WTC11 (cell line): ENCODE measurements at regions of chr14 and their contacts with region 1.

Region 1: GRCh38 chr14:95442633-95443021 is 73.8 kb downstream of the SYNE3 start:
- DNase-seq: peak; percentile 83
- ATAC-seq: peak; percentile 94
- H3K4me3 Mint-ChIP-seq: no peak overlapping the region
- H3K27ac Mint-ChIP-seq: no peak overlapping the region
- H3K4me1 Mint-ChIP-seq: no peaks in the 10 kb centered on the region
- H3K27me3 Mint-ChIP-seq: no peaks in the 10 kb centered on the region
- CTCF ChIP-seq: peak; percentile 72

Region 2: DNA sequence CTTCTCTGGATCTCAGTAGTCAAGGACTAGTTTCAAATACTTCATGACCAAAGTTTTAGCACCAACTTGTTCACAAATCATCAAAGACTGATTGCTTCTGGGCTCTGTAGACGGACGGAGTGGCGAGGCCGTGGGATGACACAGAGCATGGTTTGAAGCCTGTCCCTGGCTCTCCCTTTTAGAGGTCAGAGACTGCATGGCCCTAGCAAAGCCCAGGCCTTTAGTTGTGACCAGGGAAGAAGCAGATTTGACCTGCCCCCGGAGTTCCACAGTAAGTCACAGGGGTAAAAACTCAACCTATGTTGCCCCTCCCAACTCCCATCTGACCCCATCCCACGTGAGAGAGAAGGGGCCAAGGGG is 16.5 kb before region 1 on chr14:
- CTCF ChIA-PET with region 1: interaction called, 24 read pairs
- POLR2A ChIA-PET with region 1: no interaction called
- DNase-seq: no peak
- ATAC-seq: no peak
- H3K4me3 Mint-ChIP-seq: no peak overlapping the region
- H3K27ac Mint-ChIP-seq: no peak overlapping the region
- H3K4me1 Mint-ChIP-seq: no peaks in the 10 kb centered on the region
- H3K27me3 Mint-ChIP-seq: peaks cover 7% of the 10 kb centered on the region
- CTCF ChIP-seq: no peak

Region 3: GRCh38 chr14:95515596-95516552 is 73.2 kb after region 1 on chr14:
- CTCF ChIA-PET with region 1: interaction called, 26 read pairs
- POLR2A ChIA-PET with region 1: no interaction called
- DNase-seq: peak; percentile 68
- ATAC-seq: peak; percentile 74
- H3K4me3 Mint-ChIP-seq: peak overlapping the region; percentile 68
- H3K27ac Mint-ChIP-seq: no peak overlapping the region
- H3K4me1 Mint-ChIP-seq: peaks cover 13% of the 10 kb centered on the region
- H3K27me3 Mint-ChIP-seq: peaks cover 39% of the 10 kb centered on the region
- CTCF ChIP-seq: no peak

Region 4: DNA sequence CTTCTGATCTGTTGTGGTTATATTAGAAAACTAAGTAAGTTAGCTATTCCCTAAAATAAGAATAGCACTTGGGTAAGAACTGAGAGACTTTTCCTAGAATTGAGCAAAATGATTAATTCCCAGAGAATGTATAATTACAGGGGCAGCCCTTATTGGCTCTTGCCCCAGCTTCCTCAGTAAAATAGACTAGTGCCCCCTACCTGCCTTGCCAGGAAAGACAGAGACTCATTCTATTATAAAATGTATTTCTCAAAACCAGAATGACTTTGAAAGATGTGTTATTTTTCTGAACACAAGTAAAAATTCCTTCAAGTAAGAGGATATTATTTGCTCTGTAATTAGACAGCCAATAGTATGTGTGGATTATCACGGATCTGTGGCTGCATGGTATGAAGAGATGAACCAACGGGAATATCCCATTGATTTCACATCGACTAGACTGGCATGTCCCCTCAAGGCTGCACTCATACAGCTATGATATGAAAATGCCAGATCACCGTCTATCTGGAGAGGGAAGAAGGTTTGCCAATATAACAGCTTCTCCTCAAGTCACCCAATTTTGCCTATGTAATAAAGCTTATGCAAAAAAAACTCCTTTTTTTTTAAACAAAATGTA is 84.9 kb after region 1 on chr14:
- CTCF ChIA-PET with region 1: interaction called, 38 read pairs
- POLR2A ChIA-PET with region 1: interaction called, 3 read pairs
- DNase-seq: no peak
- ATAC-seq: peak; percentile 65
- H3K4me3 Mint-ChIP-seq: no peak overlapping the region
- H3K27ac Mint-ChIP-seq: no peak overlapping the region; the same call in 1 of the 2 replicates
- H3K4me1 Mint-ChIP-seq: peaks cover 21% of the 10 kb centered on the region
- H3K27me3 Mint-ChIP-seq: no peaks in the 10 kb centered on the region
- CTCF ChIP-seq: peak; percentile 63

Region 5: DNA sequence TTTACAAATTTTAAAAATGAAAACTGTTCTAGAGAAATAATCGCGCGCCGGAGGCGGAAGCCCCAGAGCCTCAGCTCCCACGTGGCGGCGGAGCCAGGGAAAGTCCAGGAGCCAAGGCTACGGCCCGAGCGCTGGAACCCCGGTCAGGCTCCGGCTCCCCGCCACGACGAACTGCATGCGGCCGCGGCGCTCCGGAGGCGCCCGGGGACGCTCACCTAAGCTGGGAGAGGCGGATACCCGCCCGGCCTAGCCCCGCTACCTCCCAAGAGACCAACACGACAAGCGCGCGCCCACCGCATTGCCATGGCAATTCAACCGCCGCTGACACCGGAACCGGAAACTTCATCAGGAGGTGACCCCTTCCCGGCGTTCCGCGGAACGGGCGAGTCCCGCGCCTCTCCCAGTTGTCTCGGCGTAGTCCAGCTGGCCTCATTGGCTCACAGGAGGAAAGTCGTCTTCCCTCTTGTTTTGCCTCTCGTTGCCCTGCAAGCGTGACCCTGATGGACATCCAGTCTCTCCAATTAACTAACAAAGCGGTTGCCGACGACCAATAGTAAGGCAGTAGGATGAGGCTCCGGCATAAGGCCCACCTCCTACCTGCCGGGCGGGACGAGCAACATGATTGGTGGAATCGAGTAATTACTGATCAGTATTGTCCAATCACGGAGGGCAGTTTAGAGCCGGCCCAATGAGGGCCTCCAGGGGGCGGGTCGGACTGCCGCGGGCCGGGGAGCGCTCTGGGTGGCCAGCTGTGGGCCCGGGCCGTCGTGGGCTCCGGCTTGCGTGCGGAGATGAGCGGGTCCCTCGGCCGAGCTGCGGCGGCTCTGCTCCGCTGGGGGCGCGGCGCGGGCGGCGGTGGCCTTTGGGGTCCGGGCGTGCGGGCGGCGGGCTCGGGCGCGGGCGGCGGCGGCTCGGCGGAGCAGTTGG is 91.9 kb after region 1 on chr14 and contains the start of gene GLRX5:
- CTCF ChIA-PET with region 1: interaction called, 11 read pairs
- POLR2A ChIA-PET with region 1: no interaction called
- DNase-seq: peak; percentile 97
- ATAC-seq: peak; percentile 95
- H3K4me3 Mint-ChIP-seq: peak within 1 kb of the TSS; percentile 97
- H3K27ac Mint-ChIP-seq: peak within 1 kb of the TSS; percentile 87
- H3K4me1 Mint-ChIP-seq: peaks cover 45% of the 10 kb centered on the region
- H3K27me3 Mint-ChIP-seq: no peaks in the 10 kb centered on the region
- CTCF ChIP-seq: no peak
- total RNA-seq, gene GLRX5: 72.8 to 78.3 TPM (median 76.2 TPM) in 3 replicates